Activated CD4-positive, alpha-beta T cell treated with anti-CD3 and anti-CD28 coated beads for 36 hours (primary cell): ENCODE measurements at regions of chr6 and their contacts with region 1.

Region 1: DNA sequence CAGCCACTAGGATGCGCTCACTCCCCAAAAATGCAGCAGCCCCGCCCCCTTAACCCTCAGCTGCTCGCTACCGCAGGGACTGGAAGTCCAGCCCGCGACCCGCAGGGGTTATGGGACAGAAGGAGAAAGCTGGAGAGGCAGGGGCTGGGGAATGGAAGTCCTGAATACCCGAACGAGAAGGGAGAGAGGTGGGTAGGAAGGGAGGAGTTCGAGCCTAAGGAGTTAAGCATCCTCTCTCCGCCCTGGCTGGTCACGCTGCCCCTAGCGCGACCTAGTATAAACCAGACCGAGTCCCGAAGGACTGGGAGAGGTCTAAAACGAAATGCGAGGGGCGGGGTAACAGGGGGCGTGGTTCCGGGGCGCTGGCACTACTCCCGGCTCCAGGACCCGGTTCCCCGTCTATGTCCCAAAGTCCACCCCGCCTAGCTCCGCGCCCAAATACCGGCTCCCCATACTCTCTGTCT is 448 bp upstream of the DDAH2 start:
- DNase-seq: peak; percentile 86
- ATAC-seq: peak; percentile 59
- H3K4me3 Mint-ChIP-seq: peak overlapping the region; percentile 69
- H3K27ac Mint-ChIP-seq: peak overlapping the region; percentile 5
- H3K4me1 Mint-ChIP-seq: peaks cover 65% of the 10 kb centered on the region
- H3K27me3 Mint-ChIP-seq: no peaks in the 10 kb centered on the region

Region 2: DNA sequence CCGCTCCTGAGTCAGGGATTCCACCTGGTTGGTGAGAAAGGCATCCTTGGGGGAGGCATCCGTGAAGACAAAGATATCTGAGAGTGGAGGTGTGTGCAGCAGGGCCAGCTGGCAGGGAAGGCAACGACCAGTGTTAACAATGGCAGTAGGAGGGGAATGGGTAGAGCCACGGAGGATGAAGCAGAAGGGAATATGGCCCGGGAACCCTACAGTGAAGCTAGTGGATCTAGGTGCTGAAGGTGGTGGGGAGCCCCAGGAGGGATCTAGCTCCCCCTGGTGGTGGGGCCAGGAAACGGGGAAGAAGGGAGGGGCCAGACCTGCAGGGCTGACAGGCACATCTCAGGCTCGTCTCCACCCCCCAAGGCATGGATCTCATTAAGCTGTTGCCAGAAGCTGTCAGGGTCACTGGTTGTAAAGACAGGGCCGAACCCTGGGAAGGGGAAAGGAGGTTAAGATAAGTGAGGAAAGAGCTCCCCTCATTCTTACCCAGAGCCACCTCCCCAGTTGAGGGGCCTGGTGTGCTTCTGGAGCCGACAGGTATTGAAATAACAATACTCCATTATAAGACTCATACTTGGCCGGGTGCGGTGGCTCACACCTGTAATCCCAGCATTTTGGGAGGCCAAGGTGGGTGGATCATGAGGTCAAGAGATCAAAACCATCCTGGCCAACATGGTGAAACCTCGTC is 40.3 kb after region 1 on chr6:
- CTCF ChIA-PET with region 1: interaction called, 8 read pairs
- POLR2A ChIA-PET with region 1: no interaction called
- intact Hi-C with region 1: loop called in 1 of 2 experiments (anchors 1 kb)
- DNase-seq: peak; percentile 91
- ATAC-seq: peak; percentile 88
- H3K4me3 Mint-ChIP-seq: no peak overlapping the region
- H3K27ac Mint-ChIP-seq: peak overlapping the region; percentile 80
- H3K4me1 Mint-ChIP-seq: peaks cover 19% of the 10 kb centered on the region
- H3K27me3 Mint-ChIP-seq: no peaks in the 10 kb centered on the region